ENCODE measurements at regions of chr2 and their contacts with region 1.

Region 1: GRCh38 chr2:20225294-20226151 is 593 bp upstream of the SDC1 start:
- DNase-seq: no peak
- H3K4me3 ChIP-seq: peak overlapping the region; percentile 64
- CTCF ChIP-seq: peak; percentile 76

Region 2: GRCh38 chr2:20106746-20107145 is 118.8 kb before region 1 on chr2:
- CTCF ChIA-PET with region 1: interaction called, 35 read pairs
- POLR2A ChIA-PET with region 1: interaction called, 4 read pairs
- DNase-seq: no peak
- H3K4me3 ChIP-seq: peak overlapping the region; percentile 25; the same call in 1 of the 2 replicates
- CTCF ChIP-seq: peak; percentile 47

Region 3: DNA sequence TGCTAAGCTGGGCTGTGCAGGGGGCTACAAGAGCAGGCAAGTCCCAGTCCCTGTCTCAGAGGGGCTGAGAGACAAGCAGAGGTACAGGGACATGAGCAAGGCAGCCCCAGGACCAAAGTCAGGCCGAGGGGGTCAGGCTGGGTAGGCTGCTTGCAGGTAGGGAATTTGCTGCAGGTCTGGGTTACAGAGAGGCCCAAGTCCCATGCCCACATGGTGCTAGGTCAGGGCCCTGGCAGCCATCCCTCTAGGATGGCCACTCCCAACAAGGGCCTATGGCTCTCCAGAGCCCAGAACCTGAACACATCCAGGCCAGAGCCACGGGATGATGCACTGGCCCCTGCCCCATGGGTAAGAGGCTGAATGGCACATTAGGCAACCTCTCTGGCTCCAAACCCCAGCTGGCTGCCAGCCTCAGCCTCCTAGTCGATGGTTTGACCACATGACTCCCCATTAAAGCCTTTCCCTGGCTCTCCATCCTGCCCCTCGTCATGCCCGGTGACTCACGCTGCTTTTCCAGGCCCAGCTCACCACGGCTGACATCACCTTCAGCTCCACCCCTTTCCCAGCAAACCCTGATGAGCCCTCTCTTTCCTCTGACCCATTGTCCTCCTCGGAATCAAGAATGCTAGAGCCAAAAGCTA is 84.3 kb before region 1 on chr2:
- CTCF ChIA-PET with region 1: interaction called, 25 read pairs
- POLR2A ChIA-PET with region 1: interaction called, 3 read pairs
- DNase-seq: peak; percentile 74
- H3K4me3 ChIP-seq: no peak overlapping the region
- CTCF ChIP-seq: no peak

Region 4: GRCh38 chr2:20198001-20198400 is 27.5 kb before region 1 on chr2:
- CTCF ChIA-PET with region 1: no interaction called
- POLR2A ChIA-PET with region 1: no interaction called
- DNase-seq: no peak
- H3K4me3 ChIP-seq: no peak overlapping the region
- CTCF ChIP-seq: no peak

Region 5: DNA sequence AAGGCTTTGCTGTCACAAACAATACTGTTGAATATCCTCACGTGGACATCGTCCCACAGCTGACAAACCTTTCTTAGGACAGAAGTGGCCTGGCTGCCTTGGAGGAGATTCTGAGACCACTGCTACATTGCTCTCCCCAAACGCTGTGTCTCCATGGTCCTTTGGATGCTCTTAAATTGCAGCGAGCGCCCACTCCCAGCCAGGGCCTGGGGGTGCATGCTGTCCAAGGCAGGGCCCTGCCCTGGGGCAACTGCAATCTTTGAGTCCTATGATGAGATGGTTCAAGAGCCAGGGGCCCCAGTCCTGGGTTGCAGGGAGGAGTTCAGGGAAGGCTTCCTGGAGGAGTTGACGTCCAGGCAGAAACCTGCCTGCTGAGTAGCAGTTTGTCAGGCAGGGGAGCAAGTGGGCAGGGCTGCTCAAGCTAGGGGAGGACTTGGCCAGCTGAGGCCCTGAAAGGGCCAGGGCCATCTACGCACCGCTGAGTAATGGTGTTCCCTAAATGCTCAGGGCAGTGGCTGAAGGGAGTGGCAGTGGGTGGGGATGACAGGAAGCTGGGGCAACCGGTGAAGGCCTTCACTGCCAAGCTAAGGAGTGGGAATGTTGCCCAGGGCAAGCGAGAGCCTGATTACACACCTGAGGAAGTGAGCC is 10.3 kb after region 1 on chr2:
- CTCF ChIA-PET with region 1: interaction called, 17 read pairs
- POLR2A ChIA-PET with region 1: no interaction called
- DNase-seq: no peak
- H3K4me3 ChIP-seq: no peak overlapping the region
- CTCF ChIP-seq: no peak

Region 6: GRCh38 chr2:20299113-20299512 is 73.6 kb after region 1 on chr2:
- CTCF ChIA-PET with region 1: no interaction called
- POLR2A ChIA-PET with region 1: no interaction called
- DNase-seq: no peak
- H3K4me3 ChIP-seq: no peak overlapping the region
- CTCF ChIP-seq: no peak

Region 7: GRCh38 chr2:20516646-20517341 is 291.3 kb after region 1 on chr2:
- CTCF ChIA-PET with region 1: no interaction called
- POLR2A ChIA-PET with region 1: no interaction called
- DNase-seq: no peak
- H3K4me3 ChIP-seq: no peak overlapping the region
- CTCF ChIP-seq: no peak